ENCODE measurements at regions of chr10 and their contacts with region 1.

Region 1: GRCh38 chr10:68331455-68332258 is at the start of gene HNRNPH3:
- DNase-seq: peak; percentile 98 to 99 (median 99)
- H3K4me3 ChIP-seq: peak within 1 kb of the TSS; percentile 87 to 95
- H3K4me3 Mint-ChIP-seq: peak within 1 kb of the TSS; percentile 99 to 100 (median 100)
- H3K27ac ChIP-seq: peak within 1 kb of the TSS; percentile 96
- H3K27ac Mint-ChIP-seq: peak within 1 kb of the TSS; percentile 99 to 100 (median 100)
- H3K4me1 ChIP-seq: peaks cover 46% of the 10 kb centered on the region
- H3K4me1 Mint-ChIP-seq: peaks cover 30 to 70% (median 41%) of the 10 kb centered on the region in 4 donors
- H3K27me3 ChIP-seq: no peaks in the 10 kb centered on the region
- H3K27me3 Mint-ChIP-seq: no peaks in the 10 kb centered on the region
- total RNA-seq, gene HNRNPH3: 170 to 176 TPM

Region 2: DNA sequence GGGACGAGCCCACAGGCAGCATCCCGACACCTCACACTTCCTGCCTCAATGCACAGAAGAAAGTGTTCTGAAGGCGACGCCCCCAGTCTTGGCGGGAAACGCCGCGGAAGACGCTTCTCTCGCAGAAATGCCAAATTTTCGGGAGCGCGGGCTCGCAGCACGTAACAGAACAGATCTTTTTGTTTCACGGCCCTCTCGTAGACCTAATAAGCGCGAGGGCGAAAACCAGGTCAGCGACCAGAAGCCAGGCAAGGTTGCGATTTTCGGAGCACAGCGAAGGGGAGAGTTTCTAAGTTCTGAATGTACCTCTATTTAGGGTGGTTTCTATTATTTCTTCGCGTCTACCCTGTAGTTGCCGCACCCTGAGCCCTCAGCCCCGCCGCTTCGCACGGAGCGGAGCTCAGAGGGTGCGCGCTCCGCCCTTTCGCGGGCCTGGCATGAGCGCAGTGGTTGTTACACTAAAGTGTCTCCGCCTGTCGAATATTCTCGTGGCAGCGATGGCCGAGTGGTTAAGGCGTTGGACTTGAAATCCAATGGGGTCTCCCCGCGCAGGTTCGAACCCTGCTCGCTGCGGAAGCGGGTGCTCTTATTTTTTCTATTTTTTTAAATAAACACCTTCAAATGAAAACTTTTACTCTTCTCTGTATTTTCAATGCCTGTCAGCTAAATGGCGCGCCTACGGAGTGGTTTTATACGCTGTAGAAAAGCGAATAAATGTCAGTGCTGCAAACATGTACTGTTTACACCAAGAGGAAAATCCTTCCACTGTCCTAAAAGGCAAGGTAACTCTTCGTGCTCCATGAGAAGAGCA is 567.4 kb before region 1 on chr10:
- CTCF ChIA-PET with region 1: no interaction called
- POLR2A ChIA-PET with region 1: interaction called, 19 read pairs
- intact Hi-C with region 1: loop called (anchors 1 kb)
- DNase-seq: peak; percentile 96 to 99 (median 97)
- H3K4me3 ChIP-seq: peak overlapping the region; percentile 58 to 98
- H3K4me3 Mint-ChIP-seq: peak overlapping the region; percentile 90 to 98 (median 95)
- H3K27ac ChIP-seq: peak overlapping the region; percentile 73
- H3K27ac Mint-ChIP-seq: peak overlapping the region; percentile 98 to 100 (median 99)
- H3K4me1 ChIP-seq: peaks cover 14% of the 10 kb centered on the region
- H3K4me1 Mint-ChIP-seq: peaks cover 9 to 28% (median 14%) of the 10 kb centered on the region in 4 donors
- H3K27me3 ChIP-seq: no peaks in the 10 kb centered on the region
- H3K27me3 Mint-ChIP-seq: peaks cover 4 to 9% of the 10 kb centered on the region in 2 donors

Region 3: DNA sequence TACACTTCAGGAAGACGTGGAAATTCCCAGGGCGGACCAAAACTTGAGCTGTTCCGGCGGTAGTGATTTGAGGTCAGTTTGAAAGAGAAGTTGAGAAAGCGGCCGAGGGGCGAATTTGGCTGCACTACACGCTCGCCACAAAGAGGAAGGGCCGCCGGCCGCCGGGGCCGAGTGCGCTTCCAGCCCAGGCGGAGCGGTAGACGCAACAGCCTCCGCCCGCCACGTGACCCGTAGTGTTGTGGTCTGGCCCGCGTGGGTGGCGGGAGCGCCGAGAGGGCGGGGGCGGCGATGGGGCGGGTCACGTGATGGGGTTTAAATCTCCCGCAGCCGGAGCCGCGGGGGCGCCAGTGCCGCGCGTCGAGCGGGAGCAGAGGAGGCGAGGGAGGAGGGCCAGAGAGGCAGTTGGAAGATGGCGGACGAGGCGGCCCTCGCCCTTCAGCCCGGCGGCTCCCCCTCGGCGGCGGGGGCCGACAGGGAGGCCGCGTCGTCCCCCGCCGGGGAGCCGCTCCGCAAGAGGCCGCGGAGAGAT is 447.3 kb before region 1 on chr10 and contains the start of gene SIRT1:
- CTCF ChIA-PET with region 1: no interaction called
- POLR2A ChIA-PET with region 1: interaction called, 19 read pairs
- intact Hi-C with region 1: loop called (anchors 1 kb)
- DNase-seq: peak; percentile 90 to 93 (median 92)
- H3K4me3 ChIP-seq: peak within 1 kb of the TSS; percentile 36 to 55
- H3K4me3 Mint-ChIP-seq: peak within 1 kb of the TSS; percentile 90 to 98 (median 94)
- H3K27ac ChIP-seq: peak within 1 kb of the TSS; percentile 55
- H3K27ac Mint-ChIP-seq: peak within 1 kb of the TSS; percentile 95 to 98 (median 96)
- H3K4me1 ChIP-seq: peaks cover 40% of the 10 kb centered on the region
- H3K4me1 Mint-ChIP-seq: peaks cover 19 to 53% (median 27%) of the 10 kb centered on the region in 4 donors
- H3K27me3 ChIP-seq: no peaks in the 10 kb centered on the region
- H3K27me3 Mint-ChIP-seq: no peaks in the 10 kb centered on the region
- total RNA-seq, gene SIRT1: 57.1 to 58.8 TPM

Region 4: GRCh38 chr10:68251625-68252495 is 79.8 kb before region 1 on chr10:
- CTCF ChIA-PET with region 1: no interaction called
- POLR2A ChIA-PET with region 1: no interaction called
- intact Hi-C with region 1: no loop called
- DNase-seq: no peak
- H3K4me3 ChIP-seq: no peak overlapping the region
- H3K4me3 Mint-ChIP-seq: no peak overlapping the region
- H3K27ac ChIP-seq: no peak overlapping the region
- H3K27ac Mint-ChIP-seq: no peak overlapping the region
- H3K4me1 ChIP-seq: no peaks in the 10 kb centered on the region
- H3K4me1 Mint-ChIP-seq: peaks cover 0 to 1% (median 0%) of the 10 kb centered on the region in 4 donors
- H3K27me3 ChIP-seq: no peaks in the 10 kb centered on the region
- H3K27me3 Mint-ChIP-seq: peaks cover 4 to 5% of the 10 kb centered on the region in 2 donors

Region 5: DNA sequence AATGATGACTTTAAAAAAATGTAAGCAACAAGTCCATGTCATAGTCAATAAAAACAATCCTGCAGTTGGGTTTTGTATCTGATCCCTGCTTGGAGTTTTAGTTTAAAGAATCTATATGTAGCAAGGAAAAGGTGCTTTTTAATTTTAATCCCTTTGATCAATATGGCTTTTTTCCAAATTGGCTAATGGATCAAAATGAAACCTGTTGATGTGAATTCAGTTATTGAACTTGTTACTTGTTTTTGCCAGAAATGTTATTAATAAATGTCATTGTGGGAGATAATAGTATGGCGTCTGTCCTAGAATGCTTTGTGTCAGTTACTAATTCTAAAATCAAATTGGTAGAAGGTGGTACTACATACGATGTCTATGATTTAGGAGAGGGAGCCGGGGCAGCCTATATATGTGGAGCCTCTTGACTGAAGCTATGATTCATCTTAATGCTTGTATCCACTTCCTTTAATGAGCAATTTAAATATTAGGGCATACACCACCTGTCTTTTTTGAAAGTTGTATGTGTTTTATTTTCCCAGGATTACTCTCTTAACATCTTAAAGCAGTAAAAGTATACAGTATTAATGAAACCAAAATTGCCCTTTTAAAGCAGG is 11.4 kb after region 1 on chr10:
- CTCF ChIA-PET with region 1: interaction called, 39 read pairs
- POLR2A ChIA-PET with region 1: interaction called, 62 read pairs
- intact Hi-C with region 1: no loop called
- DNase-seq: no peak
- H3K4me3 ChIP-seq: no peak overlapping the region
- H3K4me3 Mint-ChIP-seq: no peak overlapping the region
- H3K27ac ChIP-seq: no peak overlapping the region
- H3K27ac Mint-ChIP-seq: peak overlapping the region in 1 of 7 donors; percentile 5
- H3K4me1 ChIP-seq: peaks cover 10% of the 10 kb centered on the region
- H3K4me1 Mint-ChIP-seq: peaks cover 8 to 23% (median 14%) of the 10 kb centered on the region in 4 donors
- H3K27me3 ChIP-seq: no peaks in the 10 kb centered on the region
- H3K27me3 Mint-ChIP-seq: no peaks in the 10 kb centered on the region

Region 6: GRCh38 chr10:68406815-68407548 is 75.3 kb after region 1 on chr10 and contains the start of gene RUFY2:
- CTCF ChIA-PET with region 1: interaction called, 3 read pairs
- POLR2A ChIA-PET with region 1: interaction called, 26 read pairs
- intact Hi-C with region 1: loop called (anchors 5 kb)
- DNase-seq: peak; percentile 70 to 85 (median 74)
- H3K4me3 ChIP-seq: peak within 1 kb of the TSS; percentile 89 to 94
- H3K4me3 Mint-ChIP-seq: peak within 1 kb of the TSS; percentile 89 to 95 (median 90)
- H3K27ac ChIP-seq: peak within 1 kb of the TSS; percentile 74
- H3K27ac Mint-ChIP-seq: peak within 1 kb of the TSS; percentile 65 to 91 (median 84)
- H3K4me1 ChIP-seq: peaks cover 22% of the 10 kb centered on the region
- H3K4me1 Mint-ChIP-seq: peaks cover 14 to 18% (median 18%) of the 10 kb centered on the region in 4 donors
- H3K27me3 ChIP-seq: no peaks in the 10 kb centered on the region
- H3K27me3 Mint-ChIP-seq: no peaks in the 10 kb centered on the region
- total RNA-seq, gene RUFY2: 24.6 to 24.9 TPM

Region 7: GRCh38 chr10:68720793-68721672 is 389.4 kb after region 1 on chr10 and contains the start of gene CCAR1:
- CTCF ChIA-PET with region 1: no interaction called
- POLR2A ChIA-PET with region 1: interaction called, 9 read pairs
- intact Hi-C with region 1: loop called (anchors 2 kb)
- DNase-seq: peak; percentile 95 to 97 (median 97)
- H3K4me3 ChIP-seq: peak within 1 kb of the TSS; percentile 26 to 84
- H3K4me3 Mint-ChIP-seq: peak within 1 kb of the TSS; percentile 94 to 99 (median 98)
- H3K27ac ChIP-seq: peak within 1 kb of the TSS; percentile 94
- H3K27ac Mint-ChIP-seq: peak within 1 kb of the TSS; percentile 98 to 100 (median 99)
- H3K4me1 ChIP-seq: peaks cover 10% of the 10 kb centered on the region
- H3K4me1 Mint-ChIP-seq: peaks cover 13 to 23% (median 16%) of the 10 kb centered on the region in 4 donors
- H3K27me3 ChIP-seq: no peaks in the 10 kb centered on the region
- H3K27me3 Mint-ChIP-seq: no peaks in the 10 kb centered on the region
- total RNA-seq, gene CCAR1: 96.3 to 97.3 TPM

Region 8: DNA sequence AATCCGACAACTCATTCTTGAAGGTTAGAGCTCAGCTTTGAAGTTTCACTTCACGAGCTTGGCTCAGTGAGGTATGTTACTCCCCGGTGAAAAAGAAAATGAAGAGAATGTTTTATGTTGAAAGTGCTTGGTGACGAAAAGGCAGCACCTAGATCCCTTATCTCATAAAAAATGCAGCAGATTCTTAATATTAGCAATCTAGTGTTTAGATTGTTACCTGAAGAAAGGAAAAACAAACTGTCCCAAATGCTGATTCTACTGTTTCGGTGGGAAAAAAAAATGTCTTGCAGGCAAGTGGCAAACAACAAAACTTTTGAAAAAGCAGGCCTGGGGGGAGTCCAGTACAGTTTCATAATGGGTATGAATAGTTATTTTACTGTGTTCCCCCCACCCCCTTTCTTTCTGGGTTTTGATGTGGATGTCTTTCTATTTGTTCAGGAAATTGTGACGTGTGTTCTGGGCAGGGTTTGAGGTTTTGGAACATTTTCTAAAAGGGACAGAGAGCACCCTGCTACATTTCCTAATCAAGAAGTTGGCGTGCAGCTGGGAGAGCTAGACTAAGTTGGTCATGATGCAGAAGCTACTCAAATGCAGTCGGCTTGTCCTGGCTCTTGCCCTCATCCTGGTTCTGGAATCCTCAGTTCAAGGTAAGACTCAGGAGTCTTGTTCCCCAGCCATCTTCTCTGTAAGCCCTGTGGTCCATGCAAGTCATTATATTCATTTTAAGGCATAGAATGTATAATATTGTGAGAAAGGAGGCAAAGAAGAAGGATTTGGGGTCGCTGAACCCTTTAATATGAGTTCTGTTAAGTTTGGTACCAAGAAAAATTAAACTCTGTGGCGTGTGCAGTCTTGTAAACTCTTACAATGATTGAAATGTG is 756.2 kb after region 1 on chr10 and contains the start of gene SRGN:
- CTCF ChIA-PET with region 1: no interaction called
- POLR2A ChIA-PET with region 1: interaction called, 3 read pairs
- intact Hi-C with region 1: loop called (anchors 5 kb)
- DNase-seq: peak; percentile 87 to 94 (median 90)
- H3K4me3 ChIP-seq: peak within 1 kb of the TSS; percentile 76 to 89
- H3K4me3 Mint-ChIP-seq: peak within 1 kb of the TSS; percentile 86 to 96 (median 92)
- H3K27ac ChIP-seq: peak within 1 kb of the TSS; percentile 100
- H3K27ac Mint-ChIP-seq: peak within 1 kb of the TSS; percentile 94 to 99 (median 98)
- H3K4me1 ChIP-seq: peaks cover 49% of the 10 kb centered on the region
- H3K4me1 Mint-ChIP-seq: peaks cover 38 to 67% (median 50%) of the 10 kb centered on the region in 4 donors
- H3K27me3 ChIP-seq: no peaks in the 10 kb centered on the region
- H3K27me3 Mint-ChIP-seq: peaks cover 0 to 1% of the 10 kb centered on the region in 2 donors
- total RNA-seq, gene SRGN: 122 to 133 TPM